Posterior cingulate gyrus (tissue), 11 donors: ENCODE measurements at regions of chr14 and their contacts with region 1.

Region 1: GRCh38 chr14:36553656-36554260 is 28.7 kb downstream of the NKX2-8 start:
- DNase-seq: no peak

Region 2: GRCh38 chr14:35883677-35884293 is 670.0 kb before region 1 on chr14:
- intact Hi-C with region 1: loop called (anchors 1 kb)
- DNase-seq: peak in 6 of 10 donors; percentile 36 to 91 (median 59)

Region 3: GRCh38 chr14:36070031-36070719 is 483.6 kb before region 1 on chr14:
- intact Hi-C with region 1: loop called (anchors 5 kb)
- DNase-seq: peak; percentile 61 to 97 (median 78)

Region 4: DNA sequence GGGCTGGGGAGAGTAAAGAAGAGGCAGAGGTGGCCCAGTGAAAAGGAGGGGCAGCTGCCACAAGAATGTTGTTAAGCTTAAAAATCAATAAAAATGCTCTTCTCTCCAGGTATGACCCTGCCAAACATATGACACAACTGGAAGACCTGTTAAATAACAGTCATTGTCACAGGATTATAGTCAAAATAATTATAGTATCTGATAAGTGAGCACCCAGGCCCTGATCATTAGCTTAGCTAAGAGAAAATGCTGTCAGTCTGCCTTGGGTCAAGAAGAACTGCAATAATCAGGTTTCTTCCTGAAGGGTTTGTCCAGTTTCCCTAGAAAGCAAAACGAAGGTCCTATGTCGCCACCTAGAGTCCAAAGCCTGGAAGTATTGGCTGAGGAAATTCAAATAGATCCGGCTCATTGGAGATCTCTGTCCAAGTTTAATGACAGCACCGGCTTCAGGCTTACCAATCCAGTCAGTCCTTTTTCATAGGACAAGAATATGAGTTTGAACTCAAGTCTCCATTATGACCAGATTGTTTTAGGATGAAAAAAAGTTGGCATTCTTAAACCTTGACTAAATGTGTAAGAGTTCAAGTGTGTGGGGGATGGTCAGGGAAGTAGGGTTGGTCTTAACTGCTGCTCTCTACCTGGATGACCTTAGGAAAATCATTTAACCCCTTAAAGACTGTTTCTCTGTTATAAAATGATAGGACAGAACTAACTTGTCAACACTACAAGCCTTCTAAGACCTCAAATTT is 51.2 kb after region 1 on chr14:
- intact Hi-C with region 1: loop called (anchors 1 kb)
- DNase-seq: peak in 5 of 10 donors; percentile 34 to 78 (median 48)

Region 5: DNA sequence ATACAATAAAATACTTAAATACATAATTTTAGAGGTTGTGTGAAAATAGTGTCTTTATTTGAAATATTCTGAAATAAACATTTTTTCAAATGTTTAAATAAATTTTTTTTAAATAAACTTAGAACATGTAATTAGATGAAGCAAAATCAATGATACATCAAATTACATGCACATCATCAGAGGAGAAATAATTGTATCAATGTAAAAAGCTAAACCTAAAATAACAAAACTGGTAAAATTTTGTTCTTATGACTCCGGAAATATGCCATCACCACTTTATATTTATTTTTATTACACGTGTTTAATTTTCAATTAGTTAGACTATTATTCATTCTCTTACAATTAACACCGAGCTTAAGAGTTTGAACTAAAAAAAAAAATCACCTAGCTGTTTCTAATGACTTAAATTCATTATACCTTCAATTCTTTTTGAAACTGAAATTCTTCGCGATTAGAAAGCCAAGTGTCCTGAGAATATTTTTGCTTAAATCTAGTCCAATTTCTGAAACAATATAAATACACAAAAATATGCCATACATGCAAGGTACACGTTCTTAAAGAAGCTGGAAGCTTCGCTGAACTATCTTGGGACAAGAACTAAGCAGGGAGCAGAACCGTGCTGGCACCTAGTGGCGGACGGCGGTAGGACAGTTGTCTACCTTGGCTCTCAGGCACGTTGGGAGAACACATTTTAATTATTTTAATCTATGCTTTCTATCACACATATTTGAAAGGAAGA is 388.2 kb after region 1 on chr14:
- intact Hi-C with region 1: loop called (anchors 10 kb)
- DNase-seq: peak; percentile 41 to 95 (median 76)